Motor neuron (in vitro differentiated cells): ENCODE measurements at regions of chr22 and their contacts with region 1.

Region 1: GRCh38 chr22:33274214-33275072 is 216.3 kb upstream of the SYN3 start:
- ATAC-seq: no peak
- H3K4me3 ChIP-seq: no peak overlapping the region
- H3K27ac ChIP-seq: no peak overlapping the region
- H3K4me1 ChIP-seq: no peaks in the 10 kb centered on the region

Region 2: GRCh38 chr22:34111210-34111824 is 836.9 kb after region 1 on chr22:
- in situ Hi-C with region 1: loop called in 1 of 9 experiments (anchors 25 kb)
- ATAC-seq: peak in 7 of 8 experiments; percentile 34 to 80 (median 48)
- H3K4me3 ChIP-seq: no peak overlapping the region
- H3K27ac ChIP-seq: no peak overlapping the region
- H3K4me1 ChIP-seq: peaks cover 0 to 3% of the 10 kb centered on the region in 2 donors